MCF 10A (cell line): ENCODE measurements at regions of chr10 and their contacts with region 1.

Region 1: DNA sequence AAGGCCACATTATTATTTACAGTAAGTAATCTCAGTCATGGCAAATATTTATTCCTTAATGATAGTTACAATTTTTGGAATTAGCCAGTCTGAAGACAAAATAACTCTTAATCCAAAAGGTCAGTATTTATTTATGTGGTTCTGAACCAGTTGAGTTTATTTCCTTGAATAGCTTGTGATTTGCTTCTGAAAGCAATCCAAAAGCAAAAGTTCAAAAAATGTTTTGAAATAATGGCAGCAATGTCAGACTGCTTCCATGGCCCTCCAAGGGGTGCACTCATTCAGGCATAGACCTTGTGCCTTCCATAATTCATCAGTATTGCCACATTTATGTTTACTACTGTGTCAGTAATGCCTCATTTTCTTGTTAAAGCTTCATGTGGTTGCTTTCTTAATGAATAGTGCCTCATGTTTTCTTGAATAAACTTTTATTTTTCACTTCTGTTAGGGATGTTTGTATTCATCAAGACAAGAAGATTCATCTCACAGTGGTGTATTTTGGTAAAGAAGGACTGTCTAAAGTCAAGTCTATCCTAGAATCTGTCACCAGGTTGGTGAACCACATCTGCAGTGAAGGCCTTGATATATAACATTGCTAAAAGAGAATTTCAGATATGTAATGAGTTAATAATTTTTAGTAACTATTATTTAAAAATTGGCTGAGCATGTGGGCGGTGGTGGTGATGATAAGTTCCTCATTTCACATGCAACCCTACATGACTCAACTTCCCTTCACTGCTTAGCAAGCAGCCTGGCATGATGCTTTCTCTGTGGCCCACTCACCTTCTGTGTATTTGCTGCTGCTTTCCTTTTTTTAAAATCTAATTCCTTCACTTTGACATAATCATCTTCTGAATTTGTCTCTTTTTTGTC is 22.0 kb downstream of the CSGALNACT2 start:
- DNase-seq: no peak
- H3K4me3 Mint-ChIP-seq: no peak overlapping the region
- H3K27ac Mint-ChIP-seq: peak overlapping the region; percentile 82
- H3K4me1 Mint-ChIP-seq: peaks cover 20% of the 10 kb centered on the region
- H3K27me3 Mint-ChIP-seq: no peaks in the 10 kb centered on the region
- CTCF ChIP-seq: no peak

Region 2: DNA sequence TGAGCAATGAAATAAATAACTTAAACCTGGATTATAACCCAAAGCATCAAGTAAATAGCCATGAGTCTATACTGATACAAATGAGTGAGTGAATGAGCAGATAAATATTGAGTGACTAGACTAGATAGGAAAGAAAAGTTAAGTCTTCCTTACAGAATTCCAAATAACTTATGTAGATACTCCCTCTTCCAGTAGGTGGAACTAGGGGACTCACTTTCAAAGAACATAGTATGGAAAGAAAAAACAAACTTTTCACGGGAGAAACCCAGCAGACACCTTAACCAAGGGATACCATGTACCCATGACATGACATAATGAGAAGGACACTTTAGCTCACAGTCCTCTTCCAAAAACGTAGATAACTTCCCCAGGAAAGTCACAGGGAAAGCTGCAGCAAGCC is 10.2 kb after region 1 on chr10:
- CTCF ChIA-PET with region 1: interaction called, 21 read pairs
- POLR2A ChIA-PET with region 1: interaction called, 3 read pairs
- intact Hi-C with region 1: no loop called
- DNase-seq: no peak
- H3K4me3 Mint-ChIP-seq: no peak overlapping the region
- H3K27ac Mint-ChIP-seq: peak overlapping the region; percentile 59
- H3K4me1 Mint-ChIP-seq: peaks cover 11% of the 10 kb centered on the region
- H3K27me3 Mint-ChIP-seq: no peaks in the 10 kb centered on the region
- CTCF ChIP-seq: no peak